ENCODE measurements at regions of chr7 and their contacts with region 1.

Region 1: DNA sequence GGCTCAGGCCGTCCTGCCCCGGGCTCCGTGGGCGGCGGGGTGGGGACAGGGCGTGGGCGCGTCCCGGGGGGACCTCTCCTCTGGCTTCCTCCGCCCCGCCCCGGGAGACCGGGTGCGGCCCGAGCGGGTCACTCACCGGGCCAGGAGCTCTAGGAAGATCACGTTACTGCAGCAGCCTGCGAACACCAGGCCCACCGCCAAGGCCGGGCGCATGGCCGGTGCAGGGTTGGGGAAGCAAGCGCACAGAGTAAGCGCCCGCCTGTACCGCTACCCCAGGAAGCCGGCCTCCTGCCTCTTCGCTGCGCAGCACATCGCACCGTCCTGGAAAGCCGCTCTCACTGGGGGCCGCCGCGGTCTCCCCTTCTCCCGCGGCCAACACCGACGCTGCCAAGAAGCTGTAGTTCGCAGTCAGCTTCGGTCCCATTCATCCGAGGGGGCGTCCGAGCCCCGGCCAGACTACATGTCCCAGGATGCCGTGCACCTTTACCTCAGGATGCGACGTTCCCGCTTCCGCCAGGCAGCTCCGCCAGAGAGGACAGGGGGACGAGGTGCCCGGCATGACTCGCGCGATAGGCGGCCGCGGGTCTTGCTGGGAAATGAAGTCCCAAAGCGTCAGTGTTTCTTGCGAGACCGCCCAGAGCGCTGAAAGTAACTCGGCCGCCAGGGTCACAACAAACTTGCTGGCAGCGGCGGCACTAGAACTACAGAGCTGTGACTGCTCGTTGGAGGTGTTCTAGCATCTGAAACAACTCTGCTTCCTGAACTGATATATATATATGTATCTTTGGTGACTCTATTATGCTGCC is at the start of gene SLC35B4:
- DNase-seq: peak; percentile 97
- ATAC-seq: peak; percentile 100
- H3K4me3 Mint-ChIP-seq: peak within 1 kb of the TSS; percentile 85
- H3K27ac Mint-ChIP-seq: peak within 1 kb of the TSS; percentile 80
- H3K4me1 Mint-ChIP-seq: peaks cover 15% of the 10 kb centered on the region
- H3K27me3 Mint-ChIP-seq: peaks cover 6% of the 10 kb centered on the region
- total RNA-seq, gene SLC35B4: 13.6 to 15.5 TPM

Region 2: GRCh38 chr7:133252858-133253518 is 1063.8 kb before region 1 on chr7 and contains the start of gene EXOC4:
- CTCF ChIA-PET with region 1: no interaction called
- POLR2A ChIA-PET with region 1: no interaction called
- intact Hi-C with region 1: loop called in 1 of 2 experiments (anchors 1 kb)
- DNase-seq: peak; percentile 92
- ATAC-seq: peak; percentile 100
- H3K4me3 Mint-ChIP-seq: peak within 1 kb of the TSS; percentile 85
- H3K27ac Mint-ChIP-seq: peak within 1 kb of the TSS; percentile 83
- H3K4me1 Mint-ChIP-seq: peaks cover 32% of the 10 kb centered on the region
- H3K27me3 Mint-ChIP-seq: no peaks in the 10 kb centered on the region
- total RNA-seq, gene EXOC4: 51.9 to 90.1 TPM

Region 3: DNA sequence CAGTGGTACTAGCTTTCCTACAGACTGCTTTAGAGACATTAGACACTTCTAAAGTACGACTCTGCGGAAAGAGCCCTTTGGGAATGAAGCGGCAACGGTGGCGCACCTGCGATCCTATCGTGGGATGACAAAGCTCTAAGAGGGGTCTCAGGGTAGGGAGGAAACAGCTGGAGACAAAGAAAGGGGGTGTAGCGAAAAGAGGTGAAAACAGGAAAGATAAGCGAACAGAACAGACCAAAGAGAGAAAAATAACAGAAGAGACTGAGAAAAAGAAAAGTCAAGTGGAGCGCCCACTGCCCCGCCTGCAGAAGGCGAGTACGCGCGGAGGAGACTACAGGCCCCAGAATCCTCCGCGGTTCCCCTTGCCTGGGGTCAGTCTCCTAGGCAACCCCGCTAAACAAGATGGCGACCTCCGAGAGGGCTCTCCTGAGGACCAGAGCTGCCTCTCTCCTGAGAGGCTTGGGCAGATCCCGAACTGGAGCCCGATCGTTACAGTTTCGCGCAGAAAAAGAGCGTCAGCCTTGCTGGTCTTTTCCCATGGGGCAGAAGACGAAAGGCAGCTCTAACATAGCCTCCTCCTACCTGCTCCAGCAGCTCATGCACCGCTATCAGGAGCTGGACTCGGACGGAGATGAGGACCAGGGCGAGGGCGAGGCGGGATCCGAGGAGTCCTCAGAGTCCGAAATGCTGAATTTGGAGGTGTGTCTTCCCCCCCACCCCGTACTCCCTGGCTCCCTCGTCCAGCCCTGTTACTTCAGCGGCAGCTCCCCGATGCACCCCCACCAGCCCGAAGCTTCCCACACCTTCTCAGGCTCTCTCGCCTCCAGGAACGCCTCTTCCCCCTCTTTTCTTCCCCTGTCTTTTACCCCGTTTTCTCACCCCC is 189.5 kb before region 1 on chr7 and contains the start of gene LRGUK:
- CTCF ChIA-PET with region 1: no interaction called
- POLR2A ChIA-PET with region 1: no interaction called
- intact Hi-C with region 1: loop called (anchors 1 kb)
- DNase-seq: peak; percentile 89
- ATAC-seq: peak; percentile 100
- H3K4me3 Mint-ChIP-seq: peak within 1 kb of the TSS; percentile 76
- H3K27ac Mint-ChIP-seq: no peak within 1 kb of the TSS
- H3K4me1 Mint-ChIP-seq: peaks cover 16% of the 10 kb centered on the region
- H3K27me3 Mint-ChIP-seq: peaks cover 16% of the 10 kb centered on the region
- total RNA-seq, gene LRGUK: 0.07 to 0.14 TPM

Region 4: DNA sequence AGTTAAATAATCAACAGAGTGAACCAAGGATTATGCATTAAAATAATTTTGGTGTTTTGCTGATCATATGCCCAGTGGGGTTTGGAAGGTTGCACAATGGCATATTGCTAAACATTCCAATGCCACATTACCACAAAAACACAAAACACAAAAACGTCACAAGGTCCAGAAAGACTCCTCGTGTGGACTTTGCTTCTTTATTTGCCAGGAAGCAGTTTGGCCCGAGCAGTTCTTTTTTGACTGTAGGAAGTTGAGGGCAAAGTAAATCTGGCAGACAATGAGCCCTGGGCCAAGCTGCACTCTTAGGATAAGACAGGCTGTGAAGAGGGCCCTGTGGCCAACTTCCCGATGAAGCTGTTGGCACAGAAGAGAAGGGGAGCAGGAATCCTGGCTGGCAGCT is 39.2 kb after region 1 on chr7:
- CTCF ChIA-PET with region 1: interaction called, 15 read pairs
- POLR2A ChIA-PET with region 1: no interaction called
- intact Hi-C with region 1: loop called (anchors 1 kb)
- DNase-seq: no peak
- ATAC-seq: no peak
- H3K4me3 Mint-ChIP-seq: no peak overlapping the region
- H3K27ac Mint-ChIP-seq: no peak overlapping the region
- H3K4me1 Mint-ChIP-seq: peaks cover 10% of the 10 kb centered on the region
- H3K27me3 Mint-ChIP-seq: peaks cover 6% of the 10 kb centered on the region

Region 5: GRCh38 chr7:134458806-134459698 is 142.3 kb after region 1 on chr7 and contains the start of gene AKR1B1:
- CTCF ChIA-PET with region 1: interaction called, 5 read pairs
- POLR2A ChIA-PET with region 1: no interaction called
- intact Hi-C with region 1: loop called (anchors 2 kb)
- DNase-seq: peak; percentile 94
- ATAC-seq: peak; percentile 92
- H3K4me3 Mint-ChIP-seq: peak within 1 kb of the TSS; percentile 83
- H3K27ac Mint-ChIP-seq: peak within 1 kb of the TSS; percentile 76
- H3K4me1 Mint-ChIP-seq: peaks cover 51% of the 10 kb centered on the region
- H3K27me3 Mint-ChIP-seq: no peaks in the 10 kb centered on the region
- total RNA-seq, gene AKR1B1: 88.1 to 120 TPM

Region 6: GRCh38 chr7:134502463-134503371 is 186.0 kb after region 1 on chr7:
- CTCF ChIA-PET with region 1: no interaction called
- POLR2A ChIA-PET with region 1: no interaction called
- intact Hi-C with region 1: no loop called
- DNase-seq: no peak
- ATAC-seq: no peak
- H3K4me3 Mint-ChIP-seq: no peak overlapping the region
- H3K27ac Mint-ChIP-seq: no peak overlapping the region
- H3K4me1 Mint-ChIP-seq: no peaks in the 10 kb centered on the region
- H3K27me3 Mint-ChIP-seq: peaks cover 4% of the 10 kb centered on the region

Region 7: GRCh38 chr7:134986363-134987251 is 669.9 kb after region 1 on chr7 and contains the start of gene AGBL3:
- CTCF ChIA-PET with region 1: no interaction called
- POLR2A ChIA-PET with region 1: no interaction called
- intact Hi-C with region 1: loop called in 1 of 2 experiments (anchors 2 kb)
- DNase-seq: peak; percentile 95
- ATAC-seq: peak; percentile 97
- H3K4me3 Mint-ChIP-seq: peak within 1 kb of the TSS; percentile 91
- H3K27ac Mint-ChIP-seq: peak within 1 kb of the TSS; percentile 95
- H3K4me1 Mint-ChIP-seq: peaks cover 36% of the 10 kb centered on the region
- H3K27me3 Mint-ChIP-seq: no peaks in the 10 kb centered on the region
- total RNA-seq, gene AGBL3: 2.1 to 2.2 TPM

Region 8: DNA sequence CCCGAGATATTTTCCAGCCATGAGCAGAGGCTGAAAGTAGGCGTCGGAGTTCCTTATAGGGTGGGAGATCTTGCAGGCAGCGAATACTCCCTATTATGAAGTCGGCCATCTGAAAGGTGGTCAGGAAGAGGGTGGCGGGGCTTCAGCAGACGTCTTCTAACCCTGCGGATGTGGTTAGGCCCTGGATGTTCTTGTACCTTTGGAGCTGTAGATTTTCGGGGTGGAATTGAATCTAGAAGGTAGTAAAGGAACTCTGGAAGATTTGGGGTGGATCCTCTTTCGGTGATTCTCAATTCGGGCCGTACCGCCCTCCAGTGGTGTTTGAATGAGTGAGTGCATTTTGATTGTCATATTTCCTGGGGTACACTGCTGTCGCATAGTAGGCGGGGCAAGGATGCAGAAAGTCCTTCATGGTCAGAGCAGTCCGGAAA is 1241.6 kb after region 1 on chr7:
- CTCF ChIA-PET with region 1: no interaction called
- POLR2A ChIA-PET with region 1: no interaction called
- intact Hi-C with region 1: loop called in 1 of 2 experiments (anchors 10 kb)
- DNase-seq: peak; percentile 78
- ATAC-seq: peak; percentile 73
- H3K4me3 Mint-ChIP-seq: no peak overlapping the region
- H3K27ac Mint-ChIP-seq: no peak overlapping the region
- H3K4me1 Mint-ChIP-seq: peaks cover 29% of the 10 kb centered on the region
- H3K27me3 Mint-ChIP-seq: no peaks in the 10 kb centered on the region

Measured in activated CD4-positive, alpha-beta T cell treated with anti-CD3 and anti-CD28 coated beads for 36 hours (primary cell).